Pancreas (tissue), 10 donors: ENCODE measurements at regions of chr1 and their contacts with region 1.

Region 1: DNA sequence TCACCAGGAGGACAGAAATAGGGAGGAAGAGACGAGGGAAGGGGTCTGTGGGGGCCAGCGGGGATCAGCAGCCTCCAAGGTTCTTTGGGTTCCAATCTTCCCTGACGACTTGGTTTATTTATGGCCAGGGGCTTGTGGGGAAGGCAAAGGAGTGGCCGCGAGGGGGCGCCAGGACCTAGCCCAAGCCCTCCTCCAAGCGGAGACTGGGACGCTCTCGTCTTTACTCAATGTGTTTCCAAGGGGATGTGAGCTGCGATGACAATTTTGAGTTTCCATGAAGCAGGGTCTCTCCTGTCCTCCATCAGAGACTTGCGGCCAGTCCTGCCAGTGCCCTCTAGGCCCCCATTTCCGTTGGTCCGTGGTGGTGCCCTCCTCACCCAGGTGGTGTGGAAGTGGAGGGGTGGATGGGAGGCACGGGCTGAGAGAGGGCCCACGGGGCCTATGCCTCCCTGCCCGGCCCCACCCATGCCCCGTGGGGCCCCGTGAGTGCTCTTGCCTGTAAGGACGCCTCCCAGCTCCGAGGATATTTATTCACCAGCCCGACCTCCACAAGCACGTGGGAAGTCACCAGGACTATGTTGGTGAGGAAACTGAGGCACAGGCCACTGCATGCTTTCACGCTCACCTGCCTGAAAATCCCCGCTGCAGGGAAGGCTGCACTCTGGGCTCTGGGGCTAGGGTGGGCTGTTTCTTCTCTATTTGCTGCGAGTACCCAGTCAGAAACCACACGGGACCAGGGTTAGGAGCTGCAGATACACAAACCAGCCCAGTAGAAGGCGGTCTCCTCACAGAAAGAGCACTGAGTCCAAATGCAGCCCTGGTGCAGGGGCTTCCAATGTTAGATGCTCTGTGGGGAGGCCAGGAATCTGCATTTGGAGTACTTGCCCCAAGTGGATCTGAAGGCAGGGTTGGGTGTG is 26.5 kb downstream of the DMRTB1 start:
- DNase-seq: peak in 5 of 6 donors; percentile 43 to 91 (median 73)
- ATAC-seq: peak; percentile 80 to 95 (median 92)
- H3K4me3 ChIP-seq: no peak overlapping the region
- H3K27ac ChIP-seq: no peak overlapping the region
- H3K4me1 ChIP-seq: no peaks in the 10 kb centered on the region
- H3K27me3 ChIP-seq: peaks cover 0 to 5% (median 0%) of the 10 kb centered on the region in 4 donors
- CTCF ChIP-seq: peak; percentile 62 to 82 (median 78)

Region 2: DNA sequence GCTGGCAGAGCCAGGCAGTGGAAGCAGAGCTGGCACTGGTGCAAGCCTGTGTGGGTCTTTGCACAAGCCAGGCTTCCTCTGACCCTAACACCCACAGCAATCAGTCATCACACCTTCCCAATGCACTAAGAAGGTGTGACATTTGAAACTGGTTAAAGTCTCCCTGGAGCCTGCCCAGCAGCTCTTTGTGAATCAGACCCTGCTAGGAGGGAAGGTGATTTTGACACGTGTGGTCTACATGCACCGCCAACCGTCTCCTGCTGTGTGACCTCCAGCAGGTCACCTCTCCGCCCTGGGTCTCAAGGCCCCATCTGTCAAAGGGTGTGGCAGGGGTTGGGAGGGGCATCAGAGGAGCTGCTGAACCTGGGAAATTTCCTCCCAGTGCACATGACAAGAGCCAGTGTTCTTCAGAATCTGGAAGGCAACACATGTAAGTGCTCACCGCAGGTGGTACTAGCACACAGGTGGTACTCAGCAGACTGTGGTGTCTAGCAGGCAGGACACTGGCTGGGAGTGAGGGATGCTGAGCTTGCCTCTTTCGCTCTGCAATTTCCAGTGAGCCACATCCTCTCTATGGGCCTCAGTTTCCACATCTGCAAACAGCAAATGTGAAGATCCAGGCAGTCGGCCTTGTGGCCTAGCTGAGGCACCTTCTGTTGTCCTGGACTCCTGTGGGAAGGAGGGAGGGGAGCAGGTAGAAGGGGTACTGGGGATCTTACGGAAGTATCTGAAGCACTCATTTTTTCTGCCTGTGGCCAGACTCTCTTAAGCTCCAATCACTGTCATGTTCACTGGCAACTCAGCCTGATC is 96.7 kb after region 1 on chr1:
- intact Hi-C with region 1: no loop called
- DNase-seq: peak in 4 of 6 donors; percentile 9 to 45 (median 27)
- ATAC-seq: peak; percentile 66 to 83 (median 75)
- H3K4me3 ChIP-seq: no peak overlapping the region
- H3K27ac ChIP-seq: peak overlapping the region in 2 of 4 donors; percentile 5 to 8
- H3K4me1 ChIP-seq: no peaks in the 10 kb centered on the region
- H3K27me3 ChIP-seq: no peaks in the 10 kb centered on the region
- CTCF ChIP-seq: no peak

Region 3: GRCh38 chr1:53681977-53682685 is 196.4 kb after region 1 on chr1:
- intact Hi-C with region 1: loop called in 1 of 3 experiments (anchors 10 kb)
- DNase-seq: peak in 4 of 6 donors; percentile 8 to 73 (median 48)
- ATAC-seq: peak in 3 of 4 donors; percentile 58 to 76 (median 70)
- H3K4me3 ChIP-seq: no peak overlapping the region
- H3K27ac ChIP-seq: no peak overlapping the region
- H3K4me1 ChIP-seq: peaks cover 0 to 3% (median 0%) of the 10 kb centered on the region in 3 donors
- H3K27me3 ChIP-seq: no peaks in the 10 kb centered on the region
- CTCF ChIP-seq: peak in 2 of 4 donors; percentile 26 to 37

Region 4: DNA sequence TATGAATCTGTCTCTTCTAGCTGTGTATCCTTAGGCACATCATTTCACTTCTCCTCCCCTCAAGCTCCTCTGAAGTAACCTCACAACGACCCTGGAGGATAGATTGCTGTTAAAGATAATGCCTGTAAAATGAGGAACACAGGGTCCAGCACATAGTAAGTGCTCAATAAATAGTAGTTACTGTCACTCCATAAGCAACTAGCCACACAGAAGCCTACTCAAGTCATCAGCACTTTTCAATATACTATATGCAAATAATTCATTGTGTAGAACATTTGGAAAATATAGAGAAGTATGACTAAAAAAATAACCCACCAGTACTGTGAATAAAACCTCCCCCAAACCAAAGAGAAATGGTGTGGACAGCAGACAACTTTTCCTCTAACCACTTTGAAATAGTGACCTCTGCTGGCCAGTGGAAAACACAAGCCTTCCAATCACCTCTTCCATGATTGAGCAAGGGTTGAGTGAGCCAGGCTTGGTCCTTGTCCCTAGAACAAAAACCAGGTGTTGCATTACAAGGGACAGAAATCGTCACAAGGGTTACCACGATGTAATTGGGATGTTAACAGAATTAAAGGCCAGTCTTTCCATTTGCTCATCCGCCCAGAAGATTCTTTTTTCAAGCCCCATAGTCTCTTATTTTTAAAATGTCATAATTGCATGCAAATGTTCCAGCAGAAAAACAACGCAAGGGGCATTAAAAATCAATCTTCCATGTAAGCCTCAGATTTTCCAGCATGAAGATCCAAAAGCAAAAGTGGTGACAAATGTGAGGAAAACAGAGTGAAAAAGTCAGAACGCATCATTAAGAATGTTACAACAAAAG is 269.0 kb after region 1 on chr1:
- intact Hi-C with region 1: loop called in 2 of 3 experiments (anchors 5 to 10 kb)
- DNase-seq: peak in 2 of 6 donors; percentile 23 to 35
- ATAC-seq: peak in 3 of 4 donors; percentile 46 to 72 (median 65)
- H3K4me3 ChIP-seq: no peak overlapping the region
- H3K27ac ChIP-seq: no peak overlapping the region
- H3K4me1 ChIP-seq: no peaks in the 10 kb centered on the region
- H3K27me3 ChIP-seq: no peaks in the 10 kb centered on the region
- CTCF ChIP-seq: peak in 2 of 4 donors; percentile 48 to 58